CD8-positive, alpha-beta T cell (primary cell): ENCODE measurements at regions of chr2 and their contacts with region 1.

Region 1: DNA sequence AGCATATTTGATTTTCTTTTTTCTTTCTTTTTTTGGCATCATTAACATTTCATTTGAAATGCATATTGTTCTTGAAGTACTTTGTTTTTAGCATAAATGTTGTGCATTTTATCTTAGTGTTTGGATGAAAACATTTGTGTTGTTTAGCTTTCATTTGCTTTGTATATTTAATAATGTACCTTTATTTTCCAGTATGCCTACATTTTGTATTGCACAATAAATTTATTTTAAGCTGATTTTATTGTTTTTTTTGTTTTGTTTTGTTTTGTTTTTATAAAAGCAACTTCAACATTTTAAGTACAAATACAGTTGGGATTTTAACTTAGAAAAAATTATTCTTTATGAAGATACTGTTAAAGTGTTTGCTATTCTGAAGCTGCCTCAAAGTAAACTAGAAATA is 54.4 kb downstream of the GLS start:
- DNase-seq: no peak
- ATAC-seq: no peak
- H3K4me3 ChIP-seq: no peak overlapping the region
- H3K4me3 Mint-ChIP-seq: no peak overlapping the region
- H3K27ac ChIP-seq: no peak overlapping the region
- H3K27ac Mint-ChIP-seq: no peak overlapping the region
- H3K4me1 ChIP-seq: peaks cover 3% of the 10 kb centered on the region
- H3K4me1 Mint-ChIP-seq: peaks cover 22% of the 10 kb centered on the region
- H3K27me3 ChIP-seq: no peaks in the 10 kb centered on the region
- H3K27me3 Mint-ChIP-seq: no peaks in the 10 kb centered on the region
- CTCF ChIP-seq: no peak

Region 2: DNA sequence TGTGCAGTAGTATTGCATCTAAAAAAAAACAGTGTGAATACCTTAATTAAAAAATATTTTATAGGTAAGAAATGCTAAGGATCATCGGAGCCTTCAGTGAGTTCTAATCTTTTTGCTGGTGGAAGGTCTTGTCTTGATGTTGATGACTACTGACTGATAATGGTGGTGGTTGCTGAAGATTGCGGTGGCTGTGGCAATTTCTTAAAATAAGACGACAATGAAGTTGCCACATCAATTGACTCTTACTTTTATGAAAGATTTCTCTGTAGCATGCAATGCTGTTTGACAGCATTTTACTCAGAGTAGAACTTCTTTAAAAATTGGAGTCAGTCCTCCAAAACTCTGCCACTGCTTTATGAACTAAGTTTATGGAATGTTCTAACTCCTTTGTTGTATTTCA is 18.2 kb before region 1 on chr2:
- CTCF ChIA-PET with region 1: no interaction called
- POLR2A ChIA-PET with region 1: no interaction called
- intact Hi-C with region 1: loop called in 1 of 2 experiments (anchors 2 kb)
- DNase-seq: peak in 4 of 9 experiments; percentile 23 to 45 (median 32)
- ATAC-seq: peak; percentile 71
- H3K4me3 ChIP-seq: no peak overlapping the region
- H3K4me3 Mint-ChIP-seq: no peak overlapping the region
- H3K27ac ChIP-seq: no peak overlapping the region
- H3K27ac Mint-ChIP-seq: peak overlapping the region; percentile 49
- H3K4me1 ChIP-seq: peaks cover 12% of the 10 kb centered on the region
- H3K4me1 Mint-ChIP-seq: peaks cover 44% of the 10 kb centered on the region
- H3K27me3 ChIP-seq: no peaks in the 10 kb centered on the region
- H3K27me3 Mint-ChIP-seq: no peaks in the 10 kb centered on the region
- CTCF ChIP-seq: no peak

Region 3: DNA sequence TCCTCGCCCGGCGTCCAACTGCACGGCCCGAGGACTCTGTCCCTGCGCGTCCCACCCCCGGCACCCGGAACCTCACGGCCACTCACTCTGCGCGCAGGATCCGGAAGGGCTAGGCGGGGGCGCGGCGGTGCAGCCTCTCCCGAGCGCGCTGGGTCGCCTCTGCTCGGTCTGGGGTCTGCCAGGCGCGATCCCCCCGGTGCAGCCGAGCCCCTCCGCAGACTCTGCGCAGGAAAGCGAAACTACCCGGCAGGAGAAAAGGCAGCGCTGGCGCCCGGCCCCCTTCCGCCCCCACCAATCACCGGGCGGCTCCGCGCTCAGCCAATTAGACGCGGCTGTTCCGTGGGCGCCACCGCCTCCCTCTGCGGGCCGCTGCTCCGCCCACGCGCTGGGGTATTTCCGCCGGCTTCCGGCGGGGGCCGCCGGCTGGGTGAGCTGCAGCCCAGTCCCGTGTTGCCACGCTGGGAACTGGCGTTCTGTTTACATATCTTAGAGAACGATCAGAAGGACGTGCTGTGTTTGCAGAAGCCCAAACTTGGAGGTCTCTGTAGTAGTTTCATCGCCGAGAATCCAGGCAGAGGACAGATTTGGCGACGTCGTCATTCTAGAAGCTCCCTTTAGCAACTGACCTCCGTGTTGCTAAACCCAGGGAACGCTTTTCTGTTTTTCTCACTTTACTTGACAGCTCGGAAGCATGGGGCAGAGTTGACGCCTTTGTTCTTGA is 79.0 kb after region 1 on chr2 and contains the start of gene STAT1:
- CTCF ChIA-PET with region 1: no interaction called
- POLR2A ChIA-PET with region 1: no interaction called
- intact Hi-C with region 1: no loop called
- DNase-seq: peak; percentile 93 to 98 (median 96)
- ATAC-seq: peak; percentile 87
- H3K4me3 ChIP-seq: peak within 1 kb of the TSS; percentile 61 to 88
- H3K4me3 Mint-ChIP-seq: no peak within 1 kb of the TSS
- H3K27ac ChIP-seq: peak within 1 kb of the TSS; percentile 91 to 94
- H3K27ac Mint-ChIP-seq: no peak within 1 kb of the TSS
- H3K4me1 ChIP-seq: peaks cover 59% of the 10 kb centered on the region
- H3K4me1 Mint-ChIP-seq: peaks cover 44% of the 10 kb centered on the region
- H3K27me3 ChIP-seq: no peaks in the 10 kb centered on the region
- H3K27me3 Mint-ChIP-seq: no peaks in the 10 kb centered on the region
- CTCF ChIP-seq: no peak
- total RNA-seq, gene STAT1: 66.7 to 69.9 TPM

Region 4: DNA sequence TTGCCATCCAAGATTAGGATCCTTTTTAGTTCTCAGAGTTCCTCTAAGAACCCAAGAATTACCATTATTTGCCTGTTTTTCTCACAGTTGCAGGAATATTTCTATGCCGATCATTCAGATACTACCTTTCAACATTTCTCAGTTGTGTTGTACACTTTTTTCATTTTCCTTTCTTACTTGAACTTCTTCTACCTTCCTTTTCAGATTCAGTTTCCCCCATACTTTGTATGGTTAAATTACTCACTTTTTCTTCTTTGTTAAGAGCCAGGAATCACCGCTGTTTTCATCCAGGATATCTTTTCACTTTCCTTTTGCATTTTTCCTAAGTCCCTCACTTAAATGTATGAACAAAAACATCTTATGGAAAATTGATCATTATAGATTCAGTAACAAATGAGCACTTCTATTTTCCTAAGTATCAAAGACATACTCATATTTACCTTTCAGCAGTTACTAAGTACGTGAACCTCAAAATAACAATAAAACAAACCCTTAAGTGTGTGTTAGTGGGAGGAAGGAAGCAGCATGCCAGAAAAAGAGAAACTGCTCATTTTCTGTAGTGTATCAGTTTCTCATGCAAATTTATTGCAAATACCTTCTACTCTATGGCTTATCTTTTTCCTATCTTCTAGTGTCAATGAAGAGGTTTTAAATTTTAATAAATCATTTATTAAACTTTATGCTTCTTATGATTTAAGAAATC is 143.3 kb after region 1 on chr2:
- CTCF ChIA-PET with region 1: no interaction called
- POLR2A ChIA-PET with region 1: no interaction called
- intact Hi-C with region 1: no loop called
- DNase-seq: no peak
- ATAC-seq: no peak
- H3K4me3 ChIP-seq: no peak overlapping the region
- H3K4me3 Mint-ChIP-seq: peak overlapping the region; percentile 1
- H3K27ac ChIP-seq: peak overlapping the region in 1 of 2 experiments; percentile 41
- H3K27ac Mint-ChIP-seq: peak overlapping the region; percentile 72
- H3K4me1 ChIP-seq: no peaks in the 10 kb centered on the region
- H3K4me1 Mint-ChIP-seq: peaks cover 43% of the 10 kb centered on the region
- H3K27me3 ChIP-seq: no peaks in the 10 kb centered on the region
- H3K27me3 Mint-ChIP-seq: no peaks in the 10 kb centered on the region
- CTCF ChIP-seq: no peak

Region 5: DNA sequence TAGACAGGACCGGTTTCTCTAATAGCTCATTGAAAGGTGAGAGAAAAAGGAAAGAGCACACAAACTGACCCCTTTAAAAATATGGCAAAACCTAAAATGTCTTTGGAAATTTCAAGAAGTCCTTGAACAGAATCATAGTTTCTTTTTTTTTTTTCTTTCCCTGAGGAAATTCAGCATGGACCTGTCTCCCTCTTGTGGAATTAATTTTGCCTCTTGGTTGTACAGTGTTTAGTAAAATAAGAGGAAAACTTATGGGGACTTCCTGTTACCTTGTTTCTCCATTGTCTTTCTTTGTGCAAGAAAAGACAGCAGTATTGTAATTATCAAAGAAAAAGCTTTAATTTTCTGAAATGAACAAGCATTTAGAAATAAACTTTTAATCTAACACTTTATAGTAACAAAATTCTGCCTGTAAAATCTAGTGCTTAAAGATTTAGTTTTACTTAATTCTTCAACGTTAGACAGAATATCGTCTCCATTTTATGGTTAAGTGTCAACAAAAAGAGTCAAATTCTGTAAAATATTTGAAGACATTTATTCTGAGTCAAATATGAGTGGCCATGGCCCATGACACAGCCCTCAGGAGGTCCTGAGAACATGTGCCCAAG is 566.6 kb after region 1 on chr2:
- CTCF ChIA-PET with region 1: no interaction called
- POLR2A ChIA-PET with region 1: no interaction called
- intact Hi-C with region 1: no loop called
- DNase-seq: no peak
- ATAC-seq: no peak
- H3K4me3 ChIP-seq: no peak overlapping the region
- H3K4me3 Mint-ChIP-seq: no peak overlapping the region
- H3K27ac ChIP-seq: no peak overlapping the region
- H3K27ac Mint-ChIP-seq: no peak overlapping the region
- H3K4me1 ChIP-seq: no peaks in the 10 kb centered on the region
- H3K4me1 Mint-ChIP-seq: no peaks in the 10 kb centered on the region
- H3K27me3 ChIP-seq: no peaks in the 10 kb centered on the region
- H3K27me3 Mint-ChIP-seq: no peaks in the 10 kb centered on the region
- CTCF ChIP-seq: no peak